Mammary epithelial cell (primary cell): ENCODE measurements at regions of chr15 and their contacts with region 1.

Region 1: GRCh38 chr15:64717735-64718495 is 57.5 kb downstream of the RBPMS2 start:
- DNase-seq: no peak
- H3K4me3 ChIP-seq: no peak overlapping the region
- H3K27ac ChIP-seq: no peak overlapping the region
- H3K4me1 ChIP-seq: no peaks in the 10 kb centered on the region
- H3K27me3 ChIP-seq: no peaks in the 10 kb centered on the region
- CTCF ChIP-seq: no peak

Region 2: DNA sequence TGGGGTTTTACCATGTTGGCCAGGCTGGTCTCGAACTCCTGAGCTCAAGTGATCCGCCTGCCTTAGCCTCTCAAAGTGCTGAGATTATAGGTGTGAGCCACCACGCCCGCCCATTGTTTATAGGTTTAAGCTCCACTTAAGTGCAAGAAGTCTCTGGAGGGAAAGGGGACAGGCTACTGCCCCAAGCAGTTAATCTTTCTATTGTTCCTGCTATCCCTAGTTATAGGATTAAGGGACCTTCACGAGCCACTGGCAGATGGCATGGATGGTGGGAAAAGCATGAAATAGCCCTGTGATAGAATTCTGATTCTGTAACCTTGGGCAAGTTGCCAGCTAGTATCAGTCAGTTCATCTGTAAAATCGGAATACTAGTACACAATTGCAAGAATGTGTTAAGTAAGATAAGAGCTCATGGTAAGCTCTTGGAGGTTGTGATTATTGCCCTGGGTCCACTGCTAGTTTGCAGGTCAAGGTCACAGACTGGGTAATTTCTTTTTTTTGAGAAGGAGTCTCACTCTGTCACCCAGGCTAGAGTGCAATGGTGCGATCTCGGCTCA is 62.8 kb after region 1 on chr15:
- CTCF ChIA-PET with region 1: no interaction called
- dilution Hi-C with region 1: loop called (anchors 5 kb)
- in situ Hi-C with region 1: no loop called
- intact Hi-C with region 1: no loop called
- DNase-seq: no peak
- H3K4me3 ChIP-seq: no peak overlapping the region
- H3K27ac ChIP-seq: no peak overlapping the region
- H3K4me1 ChIP-seq: peaks cover 2% of the 10 kb centered on the region
- H3K27me3 ChIP-seq: peaks cover 8% of the 10 kb centered on the region
- CTCF ChIP-seq: no peak